ENCODE measurements at regions of chr19 and their contacts with region 1.

Region 1: GRCh38 chr19:17052439-17053210 is 22.6 kb downstream of the HAUS8 start:
- DNase-seq: peak; percentile 84
- H3K4me3 Mint-ChIP-seq: no peak overlapping the region
- H3K27ac Mint-ChIP-seq: no peak overlapping the region
- H3K4me1 Mint-ChIP-seq: no peaks in the 10 kb centered on the region
- H3K27me3 Mint-ChIP-seq: no peaks in the 10 kb centered on the region

Region 2: DNA sequence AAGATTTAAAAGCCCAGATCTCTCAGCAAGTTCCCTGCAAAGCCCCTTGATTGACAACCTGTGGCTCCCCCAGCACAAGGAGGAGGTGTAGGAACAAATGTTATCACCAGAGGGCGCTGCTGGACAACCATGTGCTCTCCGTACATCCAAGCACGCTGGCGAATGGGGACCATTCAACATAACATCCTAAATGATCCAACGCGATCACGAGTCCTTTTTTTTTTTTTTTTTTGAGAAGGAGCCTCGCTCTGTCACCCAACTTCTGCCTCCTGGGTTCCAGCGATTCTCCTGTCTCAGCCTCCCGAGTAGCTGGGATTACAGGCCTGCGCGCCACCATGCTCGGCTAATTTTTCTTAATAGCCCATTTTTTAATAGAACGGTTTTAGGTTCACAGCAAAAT is 281.0 kb before region 1 on chr19:
- intact Hi-C with region 1: loop called (anchors 5 kb)
- DNase-seq: peak; percentile 92
- H3K4me3 Mint-ChIP-seq: no peak overlapping the region
- H3K27ac Mint-ChIP-seq: no peak overlapping the region
- H3K4me1 Mint-ChIP-seq: no peaks in the 10 kb centered on the region
- H3K27me3 Mint-ChIP-seq: peaks cover 2% of the 10 kb centered on the region